CD14-positive monocyte (primary cell): ENCODE measurements at regions of chr1 and their contacts with region 1.

Region 1: GRCh38 chr1:31789259-31790065 is 25.3 kb upstream of the ADGRB2 start:
- DNase-seq: peak; percentile 81 to 89 (median 87)
- H3K4me3 ChIP-seq: peak overlapping the region; percentile 64 to 98 (median 67)
- H3K4me3 Mint-ChIP-seq: peak overlapping the region; percentile 94 to 95
- H3K27ac ChIP-seq: peak overlapping the region in 1 of 2 donors; percentile 99
- H3K27ac Mint-ChIP-seq: peak overlapping the region; percentile 23 to 100 (median 99)
- H3K4me1 ChIP-seq: peaks cover 8 to 18% of the 10 kb centered on the region in 2 donors
- H3K4me1 Mint-ChIP-seq: peaks cover 8% of the 10 kb centered on the region
- H3K27me3 ChIP-seq: no peaks in the 10 kb centered on the region
- H3K27me3 Mint-ChIP-seq: peaks cover 0 to 13% (median 2%) of the 10 kb centered on the region in 3 donors
- CTCF ChIP-seq: peak; percentile 77

Region 2: GRCh38 chr1:30718636-30719405 is 1070.6 kb before region 1 on chr1:
- intact Hi-C with region 1: loop called in 1 of 2 experiments (anchors 2 kb)
- DNase-seq: peak; percentile 97 to 99 (median 98)
- H3K4me3 ChIP-seq: peak overlapping the region; percentile 0 to 69 (median 49)
- H3K4me3 Mint-ChIP-seq: peak overlapping the region; percentile 39 to 58
- H3K27ac ChIP-seq: peak overlapping the region; percentile 95 to 97
- H3K27ac Mint-ChIP-seq: peak overlapping the region; percentile 87 to 97 (median 93)
- H3K4me1 ChIP-seq: peaks cover 27 to 33% of the 10 kb centered on the region in 2 donors
- H3K4me1 Mint-ChIP-seq: peaks cover 24% of the 10 kb centered on the region
- H3K27me3 ChIP-seq: no peaks in the 10 kb centered on the region
- H3K27me3 Mint-ChIP-seq: peaks cover 0 to 3% (median 2%) of the 10 kb centered on the region in 3 donors
- CTCF ChIP-seq: peak; percentile 100

Region 3: GRCh38 chr1:31483012-31483946 is 306.2 kb before region 1 on chr1:
- intact Hi-C with region 1: loop called in 1 of 2 experiments (anchors 5 kb)
- DNase-seq: peak; percentile 95 to 99 (median 98)
- H3K4me3 ChIP-seq: no peak overlapping the region
- H3K4me3 Mint-ChIP-seq: peak overlapping the region in 1 of 2 donors; percentile 21
- H3K27ac ChIP-seq: peak overlapping the region; percentile 81 to 89
- H3K27ac Mint-ChIP-seq: peak overlapping the region; percentile 96 to 99 (median 98)
- H3K4me1 ChIP-seq: peaks cover 38 to 50% of the 10 kb centered on the region in 2 donors
- H3K4me1 Mint-ChIP-seq: peaks cover 47% of the 10 kb centered on the region
- H3K27me3 ChIP-seq: no peaks in the 10 kb centered on the region
- H3K27me3 Mint-ChIP-seq: peaks cover 0 to 2% (median 0%) of the 10 kb centered on the region in 3 donors
- CTCF ChIP-seq: no peak

Region 4: GRCh38 chr1:31644560-31645273 is 144.7 kb before region 1 on chr1 and contains the start of gene PEF1:
- intact Hi-C with region 1: loop called in 1 of 2 experiments (anchors 5 kb)
- DNase-seq: peak; percentile 97 to 99 (median 98)
- H3K4me3 ChIP-seq: peak within 1 kb of the TSS; percentile 56 to 86 (median 75)
- H3K4me3 Mint-ChIP-seq: peak within 1 kb of the TSS; percentile 91 to 100
- H3K27ac ChIP-seq: peak within 1 kb of the TSS; percentile 91 to 100
- H3K27ac Mint-ChIP-seq: peak within 1 kb of the TSS; percentile 99 to 100 (median 100)
- H3K4me1 ChIP-seq: peaks cover 26 to 31% of the 10 kb centered on the region in 2 donors
- H3K4me1 Mint-ChIP-seq: peaks cover 21% of the 10 kb centered on the region
- H3K27me3 ChIP-seq: no peaks in the 10 kb centered on the region
- H3K27me3 Mint-ChIP-seq: no peaks in the 10 kb centered on the region
- CTCF ChIP-seq: no peak
- polyA plus RNA-seq, gene PEF1: 36.6 to 81.7 (median 70.7) TPM

Region 5: DNA sequence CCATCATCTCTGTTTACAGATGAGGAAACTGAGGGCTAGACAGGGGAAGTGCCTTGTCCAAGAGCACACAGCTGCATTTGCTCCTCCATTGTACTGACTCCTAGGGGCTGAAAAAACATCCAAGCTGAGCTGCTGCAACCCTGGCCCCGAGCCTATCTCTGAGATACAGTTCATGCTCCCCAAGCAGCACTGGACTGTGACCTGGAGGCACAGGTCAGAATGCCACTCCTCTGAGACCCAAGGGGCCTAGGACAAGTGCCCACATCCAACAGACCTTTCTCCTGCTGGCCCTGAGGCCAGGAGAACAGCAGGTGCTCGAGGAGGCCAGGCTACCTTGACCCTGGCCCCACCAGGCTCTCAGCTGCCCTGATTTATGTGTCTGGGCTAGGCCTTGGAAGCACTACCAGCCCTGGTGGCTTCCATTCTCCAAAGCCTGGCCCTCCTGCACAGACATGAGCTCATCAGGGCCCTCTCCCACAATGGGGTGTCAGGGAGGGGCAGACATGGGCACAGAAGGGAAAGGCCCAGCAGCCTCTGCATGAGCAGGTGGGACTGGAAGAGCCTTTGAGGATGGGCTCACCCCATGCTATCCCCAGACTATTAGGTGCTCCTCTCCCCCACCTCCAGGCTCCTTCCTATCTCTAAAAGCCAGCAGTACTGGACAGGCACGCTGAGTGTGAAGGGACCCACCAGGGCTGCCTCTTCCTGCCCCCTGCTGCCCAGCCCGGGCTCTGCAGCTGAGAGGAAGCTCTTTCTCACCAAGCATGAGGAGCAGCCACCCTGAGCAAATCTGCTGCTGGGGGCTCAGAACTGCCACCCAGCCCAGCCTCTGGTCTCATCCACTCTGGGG is 44.1 kb before region 1 on chr1:
- intact Hi-C with region 1: no loop called
- DNase-seq: peak in 2 of 3 donors; percentile 8 to 21
- H3K4me3 ChIP-seq: no peak overlapping the region
- H3K4me3 Mint-ChIP-seq: no peak overlapping the region
- H3K27ac ChIP-seq: no peak overlapping the region
- H3K27ac Mint-ChIP-seq: peak overlapping the region in 1 of 7 donors; percentile 72
- H3K4me1 ChIP-seq: peaks cover 0 to 2% of the 10 kb centered on the region in 2 donors
- H3K4me1 Mint-ChIP-seq: peaks cover 9% of the 10 kb centered on the region
- H3K27me3 ChIP-seq: peaks cover 0 to 2% of the 10 kb centered on the region in 2 donors
- H3K27me3 Mint-ChIP-seq: peaks cover 8 to 21% (median 15%) of the 10 kb centered on the region in 3 donors
- CTCF ChIP-seq: peak; percentile 71

Region 6: DNA sequence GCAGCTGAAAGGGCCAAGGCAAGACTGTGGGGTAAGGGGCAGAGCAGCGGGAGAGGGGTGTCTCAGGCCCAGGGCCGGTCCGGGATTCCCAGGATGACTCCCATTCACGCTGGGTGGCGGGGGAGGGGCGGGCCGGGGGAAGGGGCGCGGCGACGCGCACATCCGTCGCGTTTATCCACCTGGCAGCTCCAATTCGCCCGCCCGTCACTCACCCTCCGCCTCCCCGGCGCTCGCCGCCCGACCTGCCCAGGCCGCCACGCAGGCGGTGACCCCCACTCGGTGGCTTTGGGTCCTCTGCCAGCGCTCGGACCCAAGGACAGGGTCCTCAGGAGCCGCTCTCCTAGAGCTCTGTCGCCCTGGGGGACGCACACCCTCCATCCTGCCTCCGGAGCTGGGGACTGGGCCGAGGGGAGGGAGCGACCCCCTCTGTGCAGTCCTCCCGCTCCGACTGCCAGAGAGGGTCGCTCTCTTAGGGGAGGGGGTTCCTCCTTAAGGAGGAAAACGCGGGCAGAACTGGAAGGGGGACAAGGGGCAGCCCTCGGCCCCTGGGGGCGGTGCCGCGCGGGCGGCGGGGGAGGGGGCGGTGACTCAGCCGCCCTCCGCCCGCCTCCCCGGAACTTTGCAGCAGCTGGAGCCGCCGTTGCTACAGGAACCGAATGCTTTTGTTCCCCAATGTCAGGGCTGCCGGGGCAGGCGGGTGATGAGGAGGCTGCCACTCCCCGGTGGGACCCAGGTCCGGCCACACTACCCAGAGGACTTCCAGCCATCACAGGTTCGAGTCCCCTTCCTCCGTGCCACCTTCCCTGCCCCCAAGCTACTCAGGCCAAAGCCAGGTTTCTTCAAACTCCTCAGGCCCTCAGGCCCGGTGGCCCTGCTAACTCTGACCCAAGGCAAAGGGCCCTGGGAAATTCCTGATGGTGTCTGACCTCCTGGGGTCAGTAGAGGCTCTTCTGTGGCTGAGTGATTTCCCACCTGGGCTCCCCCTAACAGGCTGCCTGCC is 28.7 kb before region 1 on chr1:
- intact Hi-C with region 1: loop called in 1 of 2 experiments (anchors 2 kb)
- DNase-seq: peak; percentile 72 to 85 (median 75)
- H3K4me3 ChIP-seq: peak overlapping the region in 2 of 3 experiments; percentile 18 to 71
- H3K4me3 Mint-ChIP-seq: peak overlapping the region; percentile 60 to 83
- H3K27ac ChIP-seq: no peak overlapping the region
- H3K27ac Mint-ChIP-seq: peak overlapping the region in 3 of 7 donors; percentile 2 to 77 (median 53)
- H3K4me1 ChIP-seq: peaks cover 21 to 34% of the 10 kb centered on the region in 2 donors
- H3K4me1 Mint-ChIP-seq: peaks cover 25% of the 10 kb centered on the region
- H3K27me3 ChIP-seq: peaks cover 47 to 59% of the 10 kb centered on the region in 2 donors
- H3K27me3 Mint-ChIP-seq: peaks cover 52 to 67% (median 65%) of the 10 kb centered on the region in 3 donors
- CTCF ChIP-seq: no peak